Posterior cingulate gyrus (tissue), 11 donors: ENCODE measurements at regions of chr7 and their contacts with region 1.

Region 1: GRCh38 chr7:92768501-92769393 is 67.6 kb downstream of the CDK6 start:
- DNase-seq: peak in 1 of 10 donors; percentile 12

Region 2: DNA sequence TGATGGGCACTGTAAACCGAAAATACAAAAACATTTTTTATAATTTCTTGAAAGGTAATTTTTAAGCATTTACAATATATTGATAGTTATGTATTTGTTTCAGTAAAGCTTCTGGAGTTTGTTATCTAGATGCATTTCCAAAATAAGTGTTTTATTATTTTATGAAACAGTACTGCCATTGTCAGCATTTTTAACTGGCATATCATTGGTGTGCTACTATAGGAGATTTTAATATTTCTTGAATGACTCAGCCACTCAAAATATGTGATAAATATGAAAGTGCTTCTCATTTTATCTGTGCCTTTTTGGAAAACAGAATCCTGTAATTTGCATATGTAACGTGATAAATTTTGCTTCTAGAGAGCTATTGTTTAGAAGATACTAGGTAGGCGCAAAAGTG is 425.0 kb before region 1 on chr7:
- intact Hi-C with region 1: no loop called
- DNase-seq: no peak

Region 3: DNA sequence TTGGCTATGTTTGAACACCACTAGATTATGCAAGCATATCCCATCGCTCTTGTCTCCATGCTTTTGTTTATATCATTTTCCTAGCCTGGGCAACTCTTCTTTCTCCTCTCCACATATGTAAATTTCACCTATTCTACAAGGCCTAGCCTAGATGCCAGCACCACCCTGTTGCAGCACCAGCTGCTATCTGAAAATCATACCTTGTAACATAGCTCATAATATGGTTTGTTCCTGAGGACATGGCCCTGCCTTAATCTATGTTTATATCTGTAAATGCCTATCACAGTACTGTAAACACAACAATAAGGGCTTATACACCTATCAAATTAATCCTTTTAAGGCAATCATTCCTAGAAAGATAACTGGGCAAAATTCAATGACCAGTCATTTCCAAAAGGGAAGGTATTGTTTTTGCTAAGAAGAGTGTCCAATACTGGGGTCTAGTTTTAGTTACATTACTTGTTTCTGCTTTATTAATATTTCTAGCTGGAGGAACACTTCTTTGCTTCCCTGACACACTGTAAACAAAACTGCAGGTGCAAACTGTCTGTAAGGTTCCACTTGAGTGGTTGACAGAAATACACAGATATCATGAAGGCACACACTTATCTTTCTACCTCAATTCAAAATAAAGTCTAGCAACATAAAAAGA is 94.5 kb before region 1 on chr7:
- intact Hi-C with region 1: no loop called
- DNase-seq: no peak

Region 4: GRCh38 chr7:92717993-92718716 is 50.6 kb before region 1 on chr7:
- intact Hi-C with region 1: loop called (anchors 10 kb)
- DNase-seq: peak; percentile 20 to 92 (median 58)